ENCODE measurements at regions of chr17 and their contacts with region 1.

Region 1: DNA sequence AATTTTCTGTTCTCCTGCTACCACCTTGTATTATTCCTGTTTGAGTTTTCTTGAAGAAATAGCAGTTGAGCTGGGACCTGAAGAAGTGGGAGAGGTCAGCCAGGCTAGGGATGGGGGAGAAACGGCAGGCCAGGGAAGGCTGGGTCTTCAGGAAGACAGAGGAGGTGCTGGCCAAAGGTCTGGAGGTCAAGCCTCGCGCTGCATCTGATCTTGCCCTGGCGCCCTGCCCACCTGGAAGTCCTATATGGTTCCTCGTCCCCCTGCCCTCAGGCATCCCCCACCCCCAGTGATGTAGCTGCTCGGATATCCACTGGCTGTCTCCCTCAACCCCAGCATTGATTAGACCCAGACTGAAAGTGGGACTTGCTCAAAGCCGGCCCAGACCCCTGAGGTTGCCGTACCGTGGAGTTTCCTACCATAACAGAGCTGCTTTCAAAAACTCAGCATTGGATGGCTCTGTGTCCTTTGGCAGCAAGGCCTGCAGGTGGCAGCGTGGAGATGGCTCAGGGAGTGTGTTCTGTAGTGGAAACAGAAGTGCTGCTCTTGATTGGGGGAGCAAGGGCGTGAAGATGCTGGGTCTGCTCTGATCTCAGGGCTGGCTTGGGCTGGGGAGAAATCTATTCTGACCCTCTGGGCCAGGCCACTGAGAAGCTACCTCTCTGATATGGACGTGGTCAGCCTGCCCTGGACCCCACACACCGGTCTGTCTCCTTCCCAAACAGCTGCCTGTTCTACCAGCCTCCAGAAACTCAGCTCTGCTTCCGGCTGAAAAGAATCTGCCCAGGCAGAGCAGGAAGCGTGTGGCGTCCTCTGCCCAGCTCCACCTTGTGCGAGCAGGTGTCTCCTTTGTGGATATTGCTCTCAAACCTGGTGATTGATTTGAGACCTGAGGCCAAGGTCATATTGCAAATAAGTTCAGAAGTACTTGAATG is 107.0 kb upstream of the CACNG5 start:
- DNase-seq: peak; percentile 57
- H3K4me3 ChIP-seq: no peak overlapping the region
- H3K27ac ChIP-seq: peak overlapping the region in 2 of 4 donors; percentile 6 to 11
- H3K4me1 ChIP-seq: peaks cover 20 to 30% (median 25%) of the 10 kb centered on the region in 4 donors
- H3K27me3 ChIP-seq: no peaks in the 10 kb centered on the region
- CTCF ChIP-seq: peak; percentile 24 to 60 (median 47)
- EP300 ChIP-seq: no peak
- POLR2A ChIP-seq: no peak

Region 2: GRCh38 chr17:66580184-66580955 is 147.5 kb before region 1 on chr17:
- in situ Hi-C with region 1: no loop called
- intact Hi-C with region 1: no loop called
- DNase-seq: peak; percentile 30
- H3K4me3 ChIP-seq: no peak overlapping the region
- H3K27ac ChIP-seq: peak overlapping the region; percentile 20 to 61 (median 37)
- H3K4me1 ChIP-seq: peaks cover 3 to 20% (median 7%) of the 10 kb centered on the region in 4 donors
- H3K27me3 ChIP-seq: no peaks in the 10 kb centered on the region
- CTCF ChIP-seq: no peak
- EP300 ChIP-seq: no peak
- POLR2A ChIP-seq: no peak

Region 3: DNA sequence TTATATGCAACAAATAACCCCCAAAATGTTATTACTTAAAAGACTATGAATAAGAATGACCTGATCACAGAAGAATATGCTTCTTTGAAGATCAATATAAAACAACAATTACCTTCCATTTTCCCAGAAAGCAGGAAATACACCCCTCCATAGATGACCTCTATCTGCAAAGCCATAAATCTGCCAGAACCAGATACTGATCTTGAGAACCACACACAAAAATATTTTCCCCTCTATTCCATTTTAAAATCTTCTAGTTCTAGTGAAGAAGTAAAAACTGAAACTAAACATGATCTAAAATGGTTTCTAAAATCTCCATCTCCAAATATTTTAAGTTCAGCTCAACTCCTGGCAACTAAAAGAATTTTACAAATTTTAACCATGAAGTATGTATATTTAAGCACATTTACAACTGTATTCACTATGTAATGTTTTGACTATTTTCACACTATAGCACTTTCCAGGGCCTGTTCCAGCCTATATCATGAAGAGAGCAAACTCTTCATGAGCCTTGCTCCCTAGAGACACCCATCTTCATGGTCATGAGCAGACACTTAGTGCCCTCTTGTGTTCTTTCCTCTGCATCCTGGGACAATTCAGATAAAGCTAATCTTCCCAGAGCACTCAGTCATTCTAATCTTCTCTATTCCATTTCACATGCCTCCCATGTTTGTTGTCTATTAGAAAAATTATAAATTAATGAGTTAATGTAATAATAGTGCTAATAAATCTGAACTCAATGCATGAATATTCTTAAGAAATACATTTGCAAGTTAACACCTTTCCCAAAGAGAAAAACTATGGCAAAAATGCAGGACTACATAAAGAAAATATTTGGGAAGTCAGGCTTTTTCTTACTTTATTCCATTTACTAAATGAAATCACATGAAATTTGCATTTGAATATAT is 430.1 kb after region 1 on chr17:
- in situ Hi-C with region 1: loop called in 1 of 4 experiments (anchors 25 kb)
- intact Hi-C with region 1: no loop called
- DNase-seq: no peak
- H3K4me3 ChIP-seq: no peak overlapping the region
- H3K27ac ChIP-seq: no peak overlapping the region
- H3K4me1 ChIP-seq: no peaks in the 10 kb centered on the region
- H3K27me3 ChIP-seq: no peaks in the 10 kb centered on the region
- CTCF ChIP-seq: peak in 2 of 5 experiments; percentile 8 to 18
- EP300 ChIP-seq: no peak
- POLR2A ChIP-seq: no peak

Region 4: DNA sequence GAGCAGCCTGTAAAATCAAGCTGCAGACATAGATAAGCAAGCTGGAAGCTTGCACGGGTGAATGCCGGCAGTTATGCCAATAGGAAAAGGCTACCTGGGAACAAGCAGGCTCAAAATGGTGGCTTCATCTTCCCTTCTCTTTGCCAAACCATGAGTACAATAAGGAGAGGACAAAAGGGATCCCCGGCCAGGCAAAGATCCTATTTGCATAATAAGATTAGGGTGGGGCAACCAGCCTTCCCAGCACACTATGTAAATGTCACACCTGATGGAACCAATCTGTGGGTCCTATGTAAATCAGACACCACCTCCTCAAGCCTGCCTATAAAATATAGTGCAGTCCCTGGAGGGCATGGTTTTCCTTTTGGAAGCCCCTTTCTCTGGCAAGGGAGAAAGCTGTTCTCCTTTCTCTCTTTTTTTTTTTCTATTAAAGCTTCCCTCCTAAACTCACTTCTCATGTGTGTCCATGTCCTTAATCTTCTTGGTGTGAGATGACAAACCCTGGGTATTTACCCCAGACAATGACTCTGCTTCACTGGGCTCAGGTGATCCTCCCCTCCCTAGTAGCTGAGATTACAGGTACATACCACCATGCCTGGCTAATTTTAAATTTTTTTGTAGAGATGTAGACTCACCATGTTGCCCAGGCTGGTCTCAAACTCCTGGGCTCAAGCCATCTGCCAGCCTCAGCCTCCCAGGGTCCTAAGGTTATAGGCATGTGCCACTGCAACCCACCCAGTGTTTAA is 594.3 kb after region 1 on chr17:
- in situ Hi-C with region 1: loop called in 1 of 4 experiments (anchors 25 kb)
- intact Hi-C with region 1: no loop called
- DNase-seq: no peak
- H3K4me3 ChIP-seq: no peak overlapping the region
- H3K27ac ChIP-seq: no peak overlapping the region
- H3K4me1 ChIP-seq: no peaks in the 10 kb centered on the region
- H3K27me3 ChIP-seq: no peaks in the 10 kb centered on the region
- CTCF ChIP-seq: no peak
- EP300 ChIP-seq: no peak
- POLR2A ChIP-seq: no peak

Measured in transverse colon (tissue), 4 donors.